CD4-positive, alpha-beta T cell (primary cell): ENCODE measurements at regions of chr12 and their contacts with region 1.

Region 1: GRCh38 chr12:132083941-132084620 is 60.0 kb downstream of the DDX51 start:
- DNase-seq: peak; percentile 74 to 95 (median 84)
- ATAC-seq: peak; percentile 94
- H3K4me3 ChIP-seq: peak overlapping the region; percentile 75
- H3K4me3 Mint-ChIP-seq: peak overlapping the region; percentile 86
- H3K27ac ChIP-seq: peak overlapping the region in 1 of 2 donors; percentile 88
- H3K27ac Mint-ChIP-seq: peak overlapping the region; percentile 24
- H3K4me1 ChIP-seq: peaks cover 23% of the 10 kb centered on the region
- H3K4me1 Mint-ChIP-seq: peaks cover 27% of the 10 kb centered on the region
- H3K27me3 ChIP-seq: no peaks in the 10 kb centered on the region
- H3K27me3 Mint-ChIP-seq: no peaks in the 10 kb centered on the region
- CTCF ChIP-seq: no peak

Region 2: DNA sequence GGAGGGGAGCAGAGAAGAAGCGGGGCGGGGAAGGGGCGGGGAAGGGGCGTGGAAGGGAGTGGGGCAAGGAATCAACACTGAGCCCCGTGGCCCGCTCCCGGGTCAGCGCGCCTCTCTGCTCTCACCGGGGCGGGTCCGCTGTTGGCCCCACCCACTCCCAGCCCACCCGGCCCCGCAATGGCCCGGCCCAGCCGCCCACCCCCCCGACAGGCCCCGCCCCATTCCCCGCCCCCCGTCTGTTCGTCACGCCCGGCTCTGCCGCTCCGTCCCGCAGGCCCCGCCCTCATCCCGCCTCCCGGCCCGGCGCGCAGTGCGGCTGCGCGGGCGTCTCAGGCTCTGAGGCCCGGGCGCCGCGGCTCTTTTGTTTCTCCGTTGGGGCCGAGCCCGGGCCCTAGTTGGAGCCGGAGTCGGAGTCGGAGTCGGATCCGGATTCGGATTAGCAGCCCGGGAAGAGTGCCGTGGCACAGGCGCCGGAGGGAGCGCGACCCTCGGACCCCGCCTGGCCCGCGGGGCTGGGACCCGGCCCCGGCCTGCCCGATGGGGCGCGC is 189.7 kb before region 1 on chr12 and contains the start of gene ULK1:
- CTCF ChIA-PET with region 1: no interaction called
- POLR2A ChIA-PET with region 1: no interaction called
- intact Hi-C with region 1: loop called in 1 of 2 experiments (anchors 5 kb)
- DNase-seq: peak; percentile 83 to 96 (median 92)
- ATAC-seq: peak; percentile 82
- H3K4me3 ChIP-seq: peak within 1 kb of the TSS; percentile 71
- H3K4me3 Mint-ChIP-seq: peak within 1 kb of the TSS; percentile 93
- H3K27ac ChIP-seq: peak within 1 kb of the TSS in 1 of 2 donors; percentile 13
- H3K27ac Mint-ChIP-seq: peak within 1 kb of the TSS; percentile 88
- H3K4me1 ChIP-seq: peaks cover 31% of the 10 kb centered on the region
- H3K4me1 Mint-ChIP-seq: peaks cover 25% of the 10 kb centered on the region
- H3K27me3 ChIP-seq: no peaks in the 10 kb centered on the region
- H3K27me3 Mint-ChIP-seq: no peaks in the 10 kb centered on the region
- CTCF ChIP-seq: no peak
- total RNA-seq, gene ULK1: 85.0 to 91.6 TPM

Region 3: DNA sequence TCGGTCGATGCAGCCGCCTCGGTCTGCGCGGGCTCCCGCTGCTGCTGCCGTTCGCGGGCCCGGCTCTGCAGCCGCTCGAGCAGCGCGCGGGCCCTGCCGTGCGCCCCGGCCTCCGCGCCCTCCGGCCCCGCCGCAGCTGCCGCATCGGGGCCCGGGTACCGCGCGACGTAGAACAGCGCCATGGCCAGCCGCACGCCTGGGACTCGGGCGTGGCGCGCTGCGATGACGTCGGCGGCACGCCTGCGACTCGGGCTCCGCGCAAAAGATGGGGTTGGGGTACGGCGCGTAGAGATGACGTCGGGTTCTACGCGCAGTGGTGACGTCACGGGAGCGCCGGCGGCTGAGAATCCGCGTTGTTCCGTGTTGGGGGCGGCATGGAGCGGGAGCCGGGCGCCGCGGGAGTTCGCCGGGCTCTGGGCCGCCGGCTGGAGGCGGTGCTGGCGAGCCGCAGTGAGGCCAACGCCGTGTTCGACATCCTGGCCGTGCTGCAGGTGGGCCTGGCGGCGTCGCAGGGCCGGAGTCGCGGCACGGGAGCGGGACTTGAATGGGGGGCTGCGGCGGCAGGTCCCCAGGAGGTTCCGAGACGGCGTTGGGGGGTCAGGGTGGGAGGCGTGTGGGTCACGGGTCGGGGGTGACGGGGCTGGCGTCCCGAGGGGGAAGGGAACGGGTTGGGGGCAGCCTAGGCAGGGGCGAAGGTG is 60.2 kb after region 1 on chr12 and contains the starts of genes DDX51 and NOC4L:
- CTCF ChIA-PET with region 1: no interaction called
- POLR2A ChIA-PET with region 1: no interaction called
- intact Hi-C with region 1: loop called in 1 of 2 experiments (anchors 5 kb)
- DNase-seq: peak; percentile 92 to 99 (median 95)
- ATAC-seq: peak; percentile 90
- H3K4me3 ChIP-seq: peak within 1 kb of the TSS; percentile 72
- H3K4me3 Mint-ChIP-seq: peak within 1 kb of the TSS; percentile 99
- H3K27ac ChIP-seq: peak within 1 kb of the TSS; percentile 60 to 74
- H3K27ac Mint-ChIP-seq: peak within 1 kb of the TSS; percentile 98
- H3K4me1 ChIP-seq: peaks cover 44% of the 10 kb centered on the region
- H3K4me1 Mint-ChIP-seq: peaks cover 25% of the 10 kb centered on the region
- H3K27me3 ChIP-seq: no peaks in the 10 kb centered on the region
- H3K27me3 Mint-ChIP-seq: no peaks in the 10 kb centered on the region
- CTCF ChIP-seq: no peak
- total RNA-seq, gene DDX51: 58.0 to 59.3 TPM
- total RNA-seq, gene NOC4L: 21.8 to 22.3 TPM